HepG2 (cell line): ENCODE measurements at regions of chr15 and their contacts with region 1.

Region 1: GRCh38 chr15:74842581-74843444 is at the start of gene ULK3:
- DNase-seq: peak; percentile 70
- ATAC-seq: peak; percentile 81
- H3K4me3 ChIP-seq: peak within 1 kb of the TSS; percentile 70 to 84 (median 80)
- H3K27ac ChIP-seq: peak within 1 kb of the TSS; percentile 57
- H3K4me1 ChIP-seq: peaks cover 22% of the 10 kb centered on the region
- H3K27me3 ChIP-seq: no peaks in the 10 kb centered on the region
- CTCF ChIP-seq: peak; percentile 74
- EP300 ChIP-seq: no peak
- POLR2A ChIP-seq: peak; percentile 28 to 75; a peak in 3 of 4 replicates
- RAD21 ChIP-seq: peak; percentile 77
- total RNA-seq, gene ULK3: 8.2 and 15.2 TPM in 2 replicates

Region 2: DNA sequence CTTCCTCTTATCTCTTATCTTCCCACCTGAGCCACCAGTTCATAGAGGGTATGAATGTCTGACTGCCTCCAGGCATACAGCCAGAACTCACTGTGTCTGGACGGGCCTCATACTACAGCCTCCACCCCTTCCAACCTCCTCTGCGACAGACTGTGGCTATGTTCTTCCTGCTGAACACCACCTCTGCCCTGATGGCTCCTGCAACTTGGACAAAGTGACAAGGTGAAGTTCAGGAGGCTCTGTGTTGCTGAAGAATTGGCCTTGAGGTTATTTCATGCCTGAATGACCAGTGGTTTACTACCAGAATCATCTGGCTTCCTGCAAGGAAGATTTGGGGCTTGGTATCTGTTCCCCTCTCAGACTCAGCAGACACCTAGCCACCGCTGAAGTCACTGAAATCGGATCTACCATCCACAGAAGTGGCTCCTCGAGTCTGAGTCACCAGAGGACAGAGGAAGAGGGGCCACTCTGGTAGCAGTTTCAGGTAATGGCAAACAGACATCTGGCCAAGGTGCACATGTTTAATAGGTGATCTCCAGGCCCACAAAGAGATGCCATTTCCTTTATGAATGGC is 14.4 kb after region 1 on chr15:
- CTCF ChIA-PET with region 1: no interaction called
- POLR2A ChIA-PET with region 1: interaction called, 4 read pairs
- in situ Hi-C with region 1: no loop called
- intact Hi-C with region 1: loop called (anchors 2 kb)
- DNase-seq: no peak
- ATAC-seq: peak; percentile 69
- H3K4me3 ChIP-seq: no peak overlapping the region
- H3K27ac ChIP-seq: no peak overlapping the region
- H3K4me1 ChIP-seq: peaks cover 20% of the 10 kb centered on the region
- H3K27me3 ChIP-seq: no peaks in the 10 kb centered on the region
- CTCF ChIP-seq: no peak
- EP300 ChIP-seq: no peak
- POLR2A ChIP-seq: no peak
- RAD21 ChIP-seq: no peak

Region 3: DNA sequence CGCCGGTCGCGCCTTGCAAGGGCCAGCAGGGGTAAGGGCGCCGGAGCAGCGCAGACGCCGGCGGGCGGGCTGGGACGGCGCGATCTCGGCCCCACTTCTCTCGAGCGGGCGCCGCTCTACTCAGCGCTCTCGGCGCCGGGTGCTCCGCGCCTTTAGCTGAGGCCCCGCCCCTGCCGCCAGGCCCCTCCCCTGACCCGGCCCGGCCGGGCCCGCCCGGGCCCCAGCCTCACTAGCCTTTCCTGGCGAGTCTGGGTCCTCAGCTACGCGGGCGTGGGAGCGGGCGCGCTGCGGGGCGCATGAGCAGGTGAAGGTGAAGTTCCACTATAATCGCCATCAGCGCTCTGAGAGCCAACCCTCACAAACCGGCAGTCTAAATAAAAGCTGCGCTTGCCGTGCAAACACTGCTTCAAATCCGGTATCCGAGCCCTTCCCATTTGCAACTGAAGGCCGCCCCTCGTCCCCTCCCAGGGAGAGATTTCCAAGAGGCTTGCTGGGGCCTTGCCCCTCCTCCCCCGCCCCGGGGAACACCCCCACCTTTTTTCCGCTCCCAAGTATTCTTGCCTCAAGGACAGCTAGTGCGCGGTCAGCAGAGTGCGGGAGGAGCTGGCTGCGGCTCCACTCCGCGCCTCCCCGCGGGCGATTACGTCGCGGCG is 114.0 kb after region 1 on chr15 and contains the start of gene RPP25:
- CTCF ChIA-PET with region 1: no interaction called
- POLR2A ChIA-PET with region 1: no interaction called
- in situ Hi-C with region 1: no loop called
- intact Hi-C with region 1: no loop called
- DNase-seq: peak; percentile 27
- ATAC-seq: peak; percentile 84
- H3K4me3 ChIP-seq: peak within 1 kb of the TSS; percentile 60 to 78 (median 63)
- H3K27ac ChIP-seq: no peak within 1 kb of the TSS
- H3K4me1 ChIP-seq: peaks cover 18% of the 10 kb centered on the region
- H3K27me3 ChIP-seq: peaks cover 5 to 56% of the 10 kb centered on the region in 2 experiments; a peak in 4 of 5 replicates
- CTCF ChIP-seq: no peak
- EP300 ChIP-seq: no peak
- POLR2A ChIP-seq: no peak; a peak in 1 of 4 replicates
- RAD21 ChIP-seq: no peak
- total RNA-seq, gene RPP25: 0.08 and 0.11 TPM in 2 replicates